ENCODE measurements at regions of chr3 and their contacts with region 1.

Region 1: DNA sequence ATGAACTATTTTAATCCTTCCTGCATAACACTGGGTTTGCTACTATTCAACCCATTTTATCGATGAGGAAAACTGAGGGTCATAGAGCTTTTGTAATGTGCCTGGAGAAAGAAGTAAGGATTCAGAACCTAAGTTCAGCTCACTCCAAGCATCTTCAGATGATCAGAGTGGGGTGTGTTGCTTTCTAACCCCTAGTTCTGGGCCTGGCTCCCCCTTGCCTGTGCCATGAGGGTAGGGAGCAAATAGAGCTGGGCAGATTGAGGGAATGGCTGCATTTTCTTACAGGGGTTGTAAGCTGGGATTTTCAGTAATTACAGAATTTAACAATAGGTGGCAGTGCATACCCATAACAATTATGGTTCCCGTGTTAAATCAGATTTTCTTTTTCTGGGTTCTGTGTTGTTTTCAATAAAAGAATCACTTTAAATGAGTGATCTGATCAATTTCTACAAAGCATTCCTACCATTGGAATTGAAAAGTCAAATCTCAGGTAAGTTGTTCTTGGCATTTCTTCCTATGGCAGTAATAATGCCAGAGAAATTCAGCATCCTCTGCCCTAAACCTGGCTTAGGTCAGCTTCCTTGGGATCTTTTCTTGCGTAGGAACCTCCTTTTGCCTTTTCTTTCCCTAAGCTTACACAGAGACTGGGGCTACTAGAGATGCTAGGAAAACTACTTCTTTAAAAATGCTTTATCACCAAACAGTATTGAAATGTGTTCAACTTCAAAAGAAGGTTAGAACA is 103.8 kb upstream of the IL12A start:
- DNase-seq: peak; percentile 58
- CTCF ChIP-seq: peak; percentile 56

Region 2: DNA sequence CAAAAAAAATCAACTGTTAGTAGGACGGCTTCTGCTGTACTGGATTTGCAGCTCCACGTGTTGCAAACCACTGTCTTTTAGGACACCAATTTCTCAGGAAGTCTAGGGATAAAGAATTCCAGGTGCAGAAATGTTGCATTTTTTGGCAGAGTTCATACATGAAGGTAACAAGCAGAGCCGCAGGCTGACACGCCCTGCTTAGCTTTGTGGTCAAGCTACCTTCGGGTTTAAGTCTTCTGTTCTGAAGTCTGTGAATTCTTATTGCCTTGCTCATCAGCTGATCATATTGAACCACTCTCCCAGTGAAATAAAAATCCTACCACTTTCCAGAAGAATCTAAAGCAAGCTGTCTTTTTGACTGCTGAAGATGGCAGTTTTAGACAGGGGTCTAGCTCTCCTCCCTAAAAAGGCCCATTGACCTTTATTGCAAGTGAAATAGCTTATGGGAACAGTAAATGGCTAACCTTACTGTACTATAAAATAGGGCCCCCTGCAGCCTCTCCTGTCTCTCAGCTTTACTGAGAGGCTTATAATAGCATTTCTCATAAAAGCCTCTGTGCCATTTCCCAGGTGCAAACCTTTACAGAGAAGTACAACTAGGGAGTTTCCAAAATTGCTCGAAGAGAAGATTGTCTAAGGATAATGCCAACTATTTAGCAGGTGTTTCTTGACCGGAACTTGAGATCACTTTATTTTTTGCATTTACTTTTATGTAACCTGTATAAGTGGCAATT is 158.4 kb before region 1 on chr3:
- CTCF ChIA-PET with region 1: no interaction called
- POLR2A ChIA-PET with region 1: no interaction called
- DNase-seq: no peak
- CTCF ChIP-seq: no peak

Region 3: DNA sequence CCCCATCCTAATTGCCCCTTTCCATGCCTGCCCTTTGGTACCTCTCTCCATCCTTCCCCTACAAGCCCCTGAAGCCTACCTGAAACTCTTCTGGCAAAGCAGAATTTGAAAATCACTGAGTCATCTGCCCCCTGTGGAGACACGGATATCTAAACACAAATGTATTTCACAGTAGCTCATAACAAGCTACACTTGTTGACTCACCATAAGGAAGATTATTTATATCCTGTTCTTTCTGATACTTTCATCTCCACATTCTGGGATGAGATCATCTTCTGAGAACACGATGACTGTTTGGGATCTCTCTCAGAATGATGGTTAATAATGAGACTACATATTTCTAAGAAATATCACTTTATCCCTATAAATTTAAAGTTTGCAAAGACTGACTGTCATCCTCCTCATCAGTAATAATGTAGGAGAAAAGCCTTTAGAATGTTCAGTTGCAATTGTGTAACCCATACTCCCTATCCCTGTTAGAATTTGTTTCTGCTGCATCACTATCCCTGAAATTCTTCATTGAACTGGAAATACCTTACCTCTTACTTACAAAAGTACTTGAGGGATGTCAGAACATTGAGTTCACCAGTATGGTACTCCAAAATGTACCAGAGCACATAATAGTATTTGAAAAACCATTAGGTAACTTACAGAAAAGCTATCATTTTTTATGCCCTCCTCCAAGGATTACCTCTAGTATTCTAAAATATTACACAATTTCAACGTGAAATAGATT is 12.3 kb before region 1 on chr3:
- CTCF ChIA-PET with region 1: interaction called, 90 read pairs
- POLR2A ChIA-PET with region 1: no interaction called
- DNase-seq: no peak
- CTCF ChIP-seq: no peak

Region 4: GRCh38 chr3:159929435-159930141 is 44.8 kb after region 1 on chr3:
- CTCF ChIA-PET with region 1: interaction called, 11 read pairs
- POLR2A ChIA-PET with region 1: no interaction called
- DNase-seq: peak; percentile 55
- CTCF ChIP-seq: peak; percentile 46

Region 5: GRCh38 chr3:160003520-160004128 is 118.8 kb after region 1 on chr3:
- CTCF ChIA-PET with region 1: interaction called, 394 read pairs
- POLR2A ChIA-PET with region 1: no interaction called
- DNase-seq: peak; percentile 60
- CTCF ChIP-seq: peak; percentile 84

Region 6: DNA sequence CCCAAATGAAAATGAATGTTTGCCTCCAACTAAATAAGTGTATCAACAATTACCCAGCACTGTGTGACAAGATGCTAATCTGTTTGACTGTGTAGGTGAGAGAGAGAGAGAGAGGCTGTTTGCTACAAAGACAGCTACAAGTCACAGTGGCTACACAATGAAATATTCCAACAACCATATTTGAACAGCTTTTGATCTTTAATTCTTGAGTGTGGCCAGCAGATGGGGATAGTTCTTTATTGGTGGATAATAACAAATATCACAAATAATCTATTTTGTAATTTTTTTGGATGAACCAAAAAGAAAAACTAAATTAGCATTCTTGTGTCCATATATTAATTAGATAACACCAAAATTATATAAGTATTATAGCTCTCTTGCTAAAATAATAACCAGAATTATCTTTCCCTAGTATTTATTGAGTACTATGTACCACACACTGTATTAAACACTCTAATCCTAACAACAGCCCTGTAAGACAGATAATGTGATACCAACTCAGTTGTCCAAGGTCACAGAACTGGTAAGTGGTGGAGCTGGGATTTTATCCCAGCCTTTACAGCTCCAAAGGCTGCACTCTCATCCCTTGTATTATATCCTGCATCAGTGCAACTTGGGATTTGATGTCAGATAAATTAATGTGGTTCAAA is 278.5 kb after region 1 on chr3:
- CTCF ChIA-PET with region 1: interaction called, 16 read pairs
- POLR2A ChIA-PET with region 1: no interaction called
- DNase-seq: peak; percentile 27
- CTCF ChIP-seq: peak; percentile 39

Region 7: GRCh38 chr3:160399125-160400029 is 514.5 kb after region 1 on chr3 and contains the starts of genes IFT80 and SMC4:
- CTCF ChIA-PET with region 1: no interaction called
- POLR2A ChIA-PET with region 1: no interaction called
- DNase-seq: peak; percentile 93
- CTCF ChIP-seq: no peak

Measured in GM10248 (cell line).